ENCODE measurements at regions of chr15 and their contacts with region 1.

Region 1: DNA sequence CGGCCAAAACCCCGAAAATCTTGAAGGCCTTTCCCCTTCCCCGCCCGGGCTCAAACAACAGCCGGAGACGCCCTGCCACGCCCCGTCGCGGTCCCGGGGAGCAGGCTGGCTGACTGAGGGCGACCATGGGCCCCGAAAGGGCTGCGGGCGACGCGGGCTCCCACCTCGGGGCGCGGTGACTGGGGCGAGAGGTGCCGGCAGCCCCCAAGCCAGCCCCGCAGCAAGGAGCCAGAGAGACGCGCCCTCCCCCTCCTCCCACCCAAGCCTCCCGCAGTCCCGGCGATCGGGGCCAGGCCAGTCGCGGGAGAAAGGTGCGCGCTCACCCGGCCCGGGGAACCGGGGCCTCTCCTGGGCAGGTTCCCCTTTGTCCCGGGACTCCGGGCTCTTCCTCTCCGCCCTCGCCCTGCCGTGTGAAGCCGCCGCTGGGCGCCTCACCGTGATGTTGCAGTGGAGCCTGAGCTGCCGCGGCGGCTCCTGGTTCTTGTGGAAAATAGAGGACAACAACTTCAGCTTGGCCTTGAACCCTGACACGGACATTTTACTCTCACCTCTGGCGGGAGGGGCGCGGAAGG is 30.6 kb upstream of the ZSCAN2 start:
- DNase-seq: peak; percentile 84

Region 2: GRCh38 chr15:85412956-85413854 is 843.0 kb after region 1 on chr15:
- intact Hi-C with region 1: loop called (anchors 10 kb)
- DNase-seq: peak; percentile 81